Activated T-helper 1 cell treated with anti-CD3 and anti-CD28 coated beads, Interleukin-12 subunit alpha, Interleukin-12 subunit beta, Interleukin-2, Interleukin-4 antibody, amounts not matched to agents 30 ng/mL and 10 ng/mL and 1 ng/mL, durations not matched to agents 14 hours and 24 hours and 36 hours (primary cell): ENCODE measurements at regions of chr6 and their contacts with region 1.

Region 1: DNA sequence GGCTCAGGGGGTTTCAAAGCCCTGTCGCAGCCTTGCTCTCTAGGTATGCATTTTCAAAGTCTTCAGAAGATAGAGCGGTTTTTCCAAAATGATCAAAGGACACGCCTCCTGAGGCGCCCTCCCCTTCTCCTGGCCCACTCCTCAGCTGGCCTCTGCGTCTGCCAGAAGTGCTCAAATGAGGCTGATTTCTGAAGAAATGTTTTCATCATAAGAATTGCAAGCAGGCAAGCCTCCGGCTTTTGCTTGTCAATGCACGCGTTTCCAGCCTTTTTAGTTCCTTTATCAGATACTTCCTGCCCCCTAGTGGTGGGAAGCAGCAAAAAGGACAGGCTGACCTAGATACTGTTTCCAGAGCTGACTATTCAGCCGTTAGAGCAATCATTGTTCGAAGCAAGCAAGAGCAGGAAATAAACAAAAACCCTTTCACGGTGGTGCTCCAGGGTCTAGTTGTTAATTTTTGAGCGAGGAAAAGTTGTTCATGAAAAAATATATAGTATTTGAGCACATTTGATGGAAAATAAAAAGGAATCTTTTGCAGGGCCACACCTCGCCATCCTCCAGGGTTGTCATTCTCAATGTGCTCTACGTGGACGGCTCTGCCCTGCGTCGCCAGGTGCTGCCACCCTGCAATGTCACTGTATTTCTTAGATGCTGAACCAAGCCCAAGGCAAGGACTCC is 93.4 kb upstream of the ASF1A start:
- DNase-seq: peak; percentile 79
- H3K4me3 Mint-ChIP-seq: peak overlapping the region; percentile 17
- H3K27ac Mint-ChIP-seq: peak overlapping the region; percentile 15
- H3K4me1 Mint-ChIP-seq: peaks cover 35% of the 10 kb centered on the region
- H3K27me3 Mint-ChIP-seq: no peaks in the 10 kb centered on the region

Region 2: GRCh38 chr6:118283766-118284165 is 516.8 kb before region 1 on chr6:
- intact Hi-C with region 1: loop called (anchors 1 kb)
- DNase-seq: peak; percentile 7
- H3K4me3 Mint-ChIP-seq: no peak overlapping the region
- H3K27ac Mint-ChIP-seq: no peak overlapping the region
- H3K4me1 Mint-ChIP-seq: no peaks in the 10 kb centered on the region
- H3K27me3 Mint-ChIP-seq: peaks cover 18% of the 10 kb centered on the region

Region 3: GRCh38 chr6:118709859-118710350 is 90.6 kb before region 1 on chr6:
- intact Hi-C with region 1: loop called (anchors 1 kb)
- DNase-seq: peak; percentile 77
- H3K4me3 Mint-ChIP-seq: peak overlapping the region; percentile 96
- H3K27ac Mint-ChIP-seq: peak overlapping the region; percentile 99
- H3K4me1 Mint-ChIP-seq: peaks cover 94% of the 10 kb centered on the region
- H3K27me3 Mint-ChIP-seq: peaks cover under 1% of the 10 kb centered on the region

Region 4: GRCh38 chr6:118768904-118769325 is 31.6 kb before region 1 on chr6:
- intact Hi-C with region 1: loop called (anchors 2 kb)
- DNase-seq: peak; percentile 31
- H3K4me3 Mint-ChIP-seq: peak overlapping the region; percentile 1
- H3K27ac Mint-ChIP-seq: peak overlapping the region; percentile 80
- H3K4me1 Mint-ChIP-seq: peaks cover 29% of the 10 kb centered on the region
- H3K27me3 Mint-ChIP-seq: no peaks in the 10 kb centered on the region

Region 5: GRCh38 chr6:118787724-118788423 is 12.7 kb before region 1 on chr6:
- intact Hi-C with region 1: no loop called
- DNase-seq: no peak
- H3K4me3 Mint-ChIP-seq: no peak overlapping the region
- H3K27ac Mint-ChIP-seq: no peak overlapping the region
- H3K4me1 Mint-ChIP-seq: peaks cover 18% of the 10 kb centered on the region
- H3K27me3 Mint-ChIP-seq: peaks cover 2% of the 10 kb centered on the region

Region 6: GRCh38 chr6:119110601-119111548 is 310.3 kb after region 1 on chr6:
- intact Hi-C with region 1: loop called (anchors 2 kb)
- DNase-seq: peak; percentile 31
- H3K4me3 Mint-ChIP-seq: no peak overlapping the region
- H3K27ac Mint-ChIP-seq: no peak overlapping the region
- H3K4me1 Mint-ChIP-seq: peaks cover 17% of the 10 kb centered on the region
- H3K27me3 Mint-ChIP-seq: peaks cover 3% of the 10 kb centered on the region